GM12878 (cell line): ENCODE measurements at regions of chr15 and their contacts with region 1.

Region 1: GRCh38 chr15:64651573-64652260 is 123.7 kb downstream of the RBPMS2 start:
- DNase-seq: peak; percentile 82
- ATAC-seq: peak; percentile 96
- H3K4me3 ChIP-seq: peak overlapping the region; percentile 15; the same call in 1 of the 2 replicates
- H3K27ac ChIP-seq: peak overlapping the region; percentile 74
- H3K4me1 ChIP-seq: peaks cover 25% of the 10 kb centered on the region
- H3K27me3 ChIP-seq: no peaks in the 10 kb centered on the region
- CTCF ChIP-seq: no peak
- EP300 ChIP-seq: no peak
- POLR2A ChIP-seq: 0 out of 2 replicates have a peak, but pooled peaks have one; percentile 26
- RAD21 ChIP-seq: 0 out of 2 replicates have a peak, but pooled peaks have one; percentile 20

Region 2: GRCh38 chr15:64010719-64011118 is 641.0 kb before region 1 on chr15:
- CTCF ChIA-PET with region 1: no interaction called
- POLR2A ChIA-PET with region 1: no interaction called
- RAD21 ChIA-PET with region 1: no interaction called
- SMC1A ChIA-PET with region 1: no interaction called
- in situ Hi-C with region 1: no loop called
- intact Hi-C with region 1: no loop called
- DNase-seq: peak; percentile 96
- ATAC-seq: peak; percentile 98
- H3K4me3 ChIP-seq: no peak overlapping the region
- H3K27ac ChIP-seq: peak overlapping the region; percentile 76
- H3K4me1 ChIP-seq: peaks cover 32% of the 10 kb centered on the region
- H3K27me3 ChIP-seq: no peaks in the 10 kb centered on the region
- CTCF ChIP-seq: peak; percentile 36 to 71 (median 54)
- EP300 ChIP-seq: peak; percentile 61 to 78; a peak in 2 of 4 replicates
- POLR2A ChIP-seq: no peak
- RAD21 ChIP-seq: peak; percentile 77

Region 3: DNA sequence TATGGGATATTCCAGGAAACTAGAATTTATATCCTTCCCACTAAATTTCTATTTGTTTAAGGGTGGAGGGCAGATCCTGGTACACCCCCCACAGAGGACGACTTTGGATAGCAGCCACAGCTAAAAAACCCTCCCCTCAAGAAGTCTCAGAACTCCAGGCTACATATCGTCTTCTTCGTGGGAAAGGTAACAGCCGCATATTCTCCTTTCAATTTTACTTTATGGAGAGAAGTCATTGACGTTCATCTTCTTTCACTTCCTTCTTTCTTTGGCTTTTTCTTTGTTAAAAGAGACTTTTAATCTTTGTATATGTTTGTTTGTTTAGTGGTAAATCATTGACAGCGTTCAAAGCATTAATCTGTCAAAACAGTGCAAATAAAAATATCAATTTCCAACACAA is 227.7 kb before region 1 on chr15:
- CTCF ChIA-PET with region 1: interaction called, 60 read pairs
- POLR2A ChIA-PET with region 1: interaction called, 4 read pairs
- RAD21 ChIA-PET with region 1: interaction called, 39 read pairs
- SMC1A ChIA-PET with region 1: interaction called, 49 read pairs
- in situ Hi-C with region 1: no loop called
- intact Hi-C with region 1: loop called (anchors 5 kb)
- DNase-seq: peak; percentile 25
- ATAC-seq: peak; percentile 82
- H3K4me3 ChIP-seq: peak overlapping the region; percentile 16; the same call in 1 of the 2 replicates
- H3K27ac ChIP-seq: peak overlapping the region; percentile 62
- H3K4me1 ChIP-seq: peaks cover 14% of the 10 kb centered on the region
- H3K27me3 ChIP-seq: no peaks in the 10 kb centered on the region
- CTCF ChIP-seq: no peak
- EP300 ChIP-seq: peak; percentile 79 to 90; a peak in 3 of 4 replicates
- POLR2A ChIP-seq: no peak
- RAD21 ChIP-seq: no peak

Region 4: GRCh38 chr15:64460206-64460734 is 191.4 kb before region 1 on chr15 and contains the start of gene ZNF609:
- CTCF ChIA-PET with region 1: interaction called, 11 read pairs
- POLR2A ChIA-PET with region 1: interaction called, 5 read pairs
- RAD21 ChIA-PET with region 1: interaction called, 13 read pairs
- SMC1A ChIA-PET with region 1: interaction called, 10 read pairs
- in situ Hi-C with region 1: no loop called
- intact Hi-C with region 1: no loop called
- DNase-seq: no peak
- ATAC-seq: peak; percentile 63
- H3K4me3 ChIP-seq: peak within 1 kb of the TSS; percentile 78
- H3K27ac ChIP-seq: peak within 1 kb of the TSS; percentile 92
- H3K4me1 ChIP-seq: peaks cover 50% of the 10 kb centered on the region
- H3K27me3 ChIP-seq: no peaks in the 10 kb centered on the region
- CTCF ChIP-seq: 0 out of 6 replicates have a peak, but pooled peaks of 1 of the 3 experiments have one; percentile 4
- EP300 ChIP-seq: no peak
- POLR2A ChIP-seq: peak; percentile 72
- RAD21 ChIP-seq: peak; percentile 27; the same call in 1 of the 2 replicates
- polyA plus RNA-seq, gene ZNF609: 5.1 to 7.4 TPM

Region 5: DNA sequence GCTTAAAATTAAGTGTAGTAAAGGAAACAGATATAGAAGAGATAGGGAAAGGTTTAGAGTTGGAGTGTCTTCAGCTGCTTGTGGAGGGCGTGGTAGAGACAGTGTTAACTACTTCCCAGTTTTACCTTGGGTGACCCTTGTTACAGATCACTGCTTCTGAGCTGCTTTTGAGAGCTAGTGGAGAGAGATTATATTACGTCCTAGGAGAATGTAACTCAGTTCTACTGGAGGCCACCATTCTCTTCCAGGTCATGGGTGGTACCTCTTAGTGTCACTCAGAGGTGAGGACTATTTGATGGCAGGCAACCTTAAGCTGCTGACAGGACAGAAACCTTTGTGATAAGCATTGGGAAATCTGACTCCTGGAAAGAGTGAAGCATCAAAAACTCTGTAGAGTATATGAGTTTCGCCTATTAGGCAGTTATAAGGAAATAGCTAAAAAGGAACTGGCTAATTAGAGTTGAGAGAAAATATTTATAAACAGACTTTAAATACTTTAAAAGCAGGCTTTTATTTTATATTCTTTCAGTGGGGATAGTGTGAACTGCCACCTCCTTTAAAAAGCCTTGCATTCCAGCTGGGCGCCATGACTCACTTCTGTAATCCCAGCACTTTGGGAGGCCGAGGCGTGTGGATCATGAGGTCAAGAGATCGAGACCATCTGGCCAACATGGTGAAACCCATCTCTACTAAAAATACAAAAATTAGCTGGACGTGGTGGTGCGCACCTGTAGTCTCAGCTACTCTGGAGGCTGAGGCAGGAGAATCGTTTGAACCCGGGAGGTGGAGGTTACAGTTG is 84.9 kb before region 1 on chr15:
- CTCF ChIA-PET with region 1: interaction called, 5 read pairs
- POLR2A ChIA-PET with region 1: interaction called, 9 read pairs
- RAD21 ChIA-PET with region 1: interaction called, 15 read pairs
- SMC1A ChIA-PET with region 1: interaction called, 13 read pairs
- in situ Hi-C with region 1: no loop called
- intact Hi-C with region 1: loop called (anchors 5 kb)
- DNase-seq: no peak
- ATAC-seq: peak; percentile 57
- H3K4me3 ChIP-seq: no peak overlapping the region
- H3K27ac ChIP-seq: no peak overlapping the region
- H3K4me1 ChIP-seq: peaks cover 33% of the 10 kb centered on the region
- H3K27me3 ChIP-seq: no peaks in the 10 kb centered on the region
- CTCF ChIP-seq: no peak
- EP300 ChIP-seq: no peak
- POLR2A ChIP-seq: no peak
- RAD21 ChIP-seq: no peak

Region 6: DNA sequence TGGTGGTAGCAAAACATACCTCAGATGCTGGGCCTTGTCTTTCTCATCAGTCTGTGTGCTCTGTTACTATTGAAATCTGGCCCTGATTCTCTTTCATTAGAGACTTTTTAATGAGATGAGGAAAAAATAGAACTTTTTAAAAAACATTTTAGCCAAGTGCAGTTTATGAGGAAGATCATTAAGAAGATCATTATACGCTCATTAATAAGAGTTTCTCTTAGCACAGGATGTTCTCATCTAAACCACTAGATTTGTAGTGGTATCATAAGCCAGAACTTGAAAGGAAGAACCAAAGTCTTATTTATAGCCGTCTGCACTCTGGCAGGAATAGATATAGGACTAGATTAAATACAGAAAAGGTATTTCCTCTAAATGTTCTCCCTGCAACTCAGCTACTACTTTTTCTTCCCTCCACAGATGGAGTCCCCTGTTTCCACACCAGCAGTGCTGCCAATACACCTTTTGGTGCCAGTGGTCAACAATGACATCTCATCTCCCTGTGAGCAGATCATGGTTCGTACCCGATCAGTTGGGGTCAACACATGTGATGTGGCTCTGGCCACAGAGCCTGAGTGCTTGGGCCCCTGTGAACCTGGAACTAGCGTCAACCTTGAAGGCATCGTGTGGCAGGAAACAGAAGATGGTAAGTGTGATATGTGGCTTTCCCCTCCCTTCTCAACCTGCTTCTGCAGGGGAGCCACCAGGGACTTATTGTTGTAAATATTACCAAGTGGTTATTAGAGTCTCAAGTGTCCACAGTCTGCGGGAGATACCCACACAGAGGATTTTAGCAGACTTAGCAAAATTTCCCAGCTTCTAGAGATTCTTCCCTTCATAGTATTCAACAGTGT is 29.1 kb before region 1 on chr15:
- CTCF ChIA-PET with region 1: interaction called, 12 read pairs
- POLR2A ChIA-PET with region 1: interaction called, 10 read pairs
- RAD21 ChIA-PET with region 1: interaction called, 27 read pairs
- SMC1A ChIA-PET with region 1: interaction called, 94 read pairs
- in situ Hi-C with region 1: no loop called
- intact Hi-C with region 1: loop called (anchors 1 kb)
- DNase-seq: peak; percentile 96
- ATAC-seq: peak; percentile 93
- H3K4me3 ChIP-seq: no peak overlapping the region
- H3K27ac ChIP-seq: peak overlapping the region; percentile 90
- H3K4me1 ChIP-seq: peaks cover 55% of the 10 kb centered on the region
- H3K27me3 ChIP-seq: no peaks in the 10 kb centered on the region
- CTCF ChIP-seq: no peak
- EP300 ChIP-seq: peak; percentile 69 to 74
- POLR2A ChIP-seq: no peak
- RAD21 ChIP-seq: no peak

Region 7: GRCh38 chr15:64997745-64998375 is 346.1 kb after region 1 on chr15:
- CTCF ChIA-PET with region 1: no interaction called
- POLR2A ChIA-PET with region 1: no interaction called
- RAD21 ChIA-PET with region 1: no interaction called
- SMC1A ChIA-PET with region 1: no interaction called
- in situ Hi-C with region 1: no loop called
- intact Hi-C with region 1: no loop called
- DNase-seq: no peak
- ATAC-seq: no peak
- H3K4me3 ChIP-seq: no peak overlapping the region
- H3K27ac ChIP-seq: no peak overlapping the region
- H3K4me1 ChIP-seq: no peaks in the 10 kb centered on the region; the same call in none of the 2 replicates
- H3K27me3 ChIP-seq: no peaks in the 10 kb centered on the region
- CTCF ChIP-seq: no peak
- EP300 ChIP-seq: no peak
- POLR2A ChIP-seq: no peak
- RAD21 ChIP-seq: no peak